ENCODE measurements at regions of chr12 and their contacts with region 1.

Region 1: DNA sequence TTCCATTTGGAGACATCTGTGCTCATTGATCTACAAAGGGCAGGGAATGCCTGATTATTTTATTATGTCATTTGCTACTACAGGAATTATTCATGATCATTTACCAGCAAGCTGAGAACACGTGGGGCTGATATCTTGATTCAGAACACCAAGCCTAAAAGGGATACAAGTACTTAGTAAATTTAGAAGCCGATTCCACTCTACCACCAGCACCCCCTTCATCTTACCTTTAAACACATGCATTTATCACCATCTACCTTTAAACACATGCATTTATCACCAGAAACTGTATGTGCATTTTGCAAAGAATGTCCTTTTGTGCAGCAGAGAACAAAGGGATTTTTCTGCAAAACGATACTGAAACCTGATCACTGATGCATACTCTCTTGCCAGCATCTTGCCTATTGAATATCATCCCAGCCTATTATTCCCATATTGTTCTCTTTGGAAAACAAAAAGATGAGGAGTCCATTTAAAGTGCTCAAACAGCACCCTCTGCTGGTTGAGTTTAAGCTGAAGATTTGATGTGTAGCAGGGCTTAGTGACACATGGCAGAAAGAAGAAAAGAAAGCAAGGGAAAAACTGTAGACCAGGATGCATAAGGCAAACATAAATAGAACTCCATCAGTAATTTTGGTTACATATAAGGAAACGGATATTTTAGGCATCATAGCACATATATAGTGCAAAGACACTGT is 132.6 kb upstream of the PLEKHG7 start:
- DNase-seq: peak; percentile 89
- H3K4me3 Mint-ChIP-seq: no peak overlapping the region
- H3K27ac Mint-ChIP-seq: no peak overlapping the region
- H3K4me1 Mint-ChIP-seq: no peaks in the 10 kb centered on the region
- H3K27me3 Mint-ChIP-seq: no peaks in the 10 kb centered on the region
- CTCF ChIP-seq: peak; percentile 71

Region 2: GRCh38 chr12:91361864-91362263 is 1208.3 kb before region 1 on chr12:
- CTCF ChIA-PET with region 1: interaction called, 3 read pairs
- POLR2A ChIA-PET with region 1: no interaction called
- intact Hi-C with region 1: loop called (anchors 2 kb)
- DNase-seq: peak; percentile 47
- H3K4me3 Mint-ChIP-seq: no peak overlapping the region
- H3K27ac Mint-ChIP-seq: no peak overlapping the region
- H3K4me1 Mint-ChIP-seq: peaks cover 5% of the 10 kb centered on the region
- H3K27me3 Mint-ChIP-seq: peaks cover 11% of the 10 kb centered on the region
- CTCF ChIP-seq: peak; percentile 50

Region 3: GRCh38 chr12:91811481-91812287 is 758.5 kb before region 1 on chr12:
- CTCF ChIA-PET with region 1: interaction called, 7 read pairs
- POLR2A ChIA-PET with region 1: interaction called, 4 read pairs
- intact Hi-C with region 1: loop called (anchors 2 kb)
- DNase-seq: peak; percentile 61
- H3K4me3 Mint-ChIP-seq: no peak overlapping the region
- H3K27ac Mint-ChIP-seq: peak overlapping the region; percentile 43
- H3K4me1 Mint-ChIP-seq: peaks cover 11% of the 10 kb centered on the region
- H3K27me3 Mint-ChIP-seq: no peaks in the 10 kb centered on the region
- CTCF ChIP-seq: peak; percentile 57

Region 4: GRCh38 chr12:92136965-92137721 is 433.1 kb before region 1 on chr12:
- CTCF ChIA-PET with region 1: interaction called, 3 read pairs
- POLR2A ChIA-PET with region 1: interaction called, 124 read pairs
- intact Hi-C with region 1: no loop called
- DNase-seq: peak; percentile 72
- H3K4me3 Mint-ChIP-seq: peak overlapping the region; percentile 89
- H3K27ac Mint-ChIP-seq: peak overlapping the region; percentile 74
- H3K4me1 Mint-ChIP-seq: peaks cover 60% of the 10 kb centered on the region
- H3K27me3 Mint-ChIP-seq: no peaks in the 10 kb centered on the region
- CTCF ChIP-seq: no peak

Region 5: GRCh38 chr12:92378682-92379479 is 191.3 kb before region 1 on chr12:
- CTCF ChIA-PET with region 1: no interaction called
- POLR2A ChIA-PET with region 1: no interaction called
- intact Hi-C with region 1: no loop called
- DNase-seq: no peak
- H3K4me3 Mint-ChIP-seq: no peak overlapping the region
- H3K27ac Mint-ChIP-seq: no peak overlapping the region
- H3K4me1 Mint-ChIP-seq: no peaks in the 10 kb centered on the region
- H3K27me3 Mint-ChIP-seq: no peaks in the 10 kb centered on the region
- CTCF ChIP-seq: no peak

Region 6: DNA sequence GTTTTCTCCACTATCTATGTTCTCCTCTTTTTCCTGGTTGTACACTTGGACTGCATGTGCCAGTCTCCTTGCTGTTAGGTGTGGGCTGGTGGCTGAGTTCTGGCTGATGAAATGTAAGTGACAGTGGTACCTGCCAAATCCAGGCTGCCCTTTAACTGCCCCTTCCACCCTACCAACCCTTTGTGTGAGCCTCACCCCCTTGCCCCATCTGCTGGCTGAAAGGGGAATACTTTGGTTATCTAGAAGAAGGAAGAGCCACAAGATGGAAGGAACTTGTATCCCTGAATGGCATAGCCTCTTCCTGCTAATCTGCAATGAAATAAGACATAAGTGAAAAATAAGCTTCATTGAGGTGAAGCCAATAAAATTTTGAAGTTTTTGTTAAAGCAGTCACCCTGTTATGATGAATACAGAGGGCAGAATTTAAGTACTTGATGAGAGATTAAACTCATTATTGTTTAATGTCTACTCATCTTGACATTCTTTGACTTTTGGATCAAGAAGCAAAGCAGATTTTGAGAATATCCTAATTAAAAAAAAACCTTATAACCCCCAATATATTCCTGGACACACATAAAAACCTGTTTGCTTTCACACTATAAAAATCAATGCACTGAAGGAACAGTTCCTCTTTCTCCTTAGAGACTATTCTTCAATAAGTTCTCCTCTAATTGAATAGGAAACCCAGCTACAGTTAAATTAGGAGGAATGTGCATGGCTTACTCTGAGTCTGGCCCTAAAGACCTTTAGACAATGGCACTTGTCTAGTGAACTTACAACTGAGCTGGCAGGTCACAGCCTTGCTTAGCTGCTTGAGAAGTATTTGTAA is 161.9 kb before region 1 on chr12:
- CTCF ChIA-PET with region 1: interaction called, 3 read pairs
- POLR2A ChIA-PET with region 1: interaction called, 5 read pairs
- intact Hi-C with region 1: loop called (anchors 5 kb)
- DNase-seq: peak; percentile 68
- H3K4me3 Mint-ChIP-seq: no peak overlapping the region
- H3K27ac Mint-ChIP-seq: no peak overlapping the region
- H3K4me1 Mint-ChIP-seq: no peaks in the 10 kb centered on the region
- H3K27me3 Mint-ChIP-seq: no peaks in the 10 kb centered on the region
- CTCF ChIP-seq: peak; percentile 48

Region 7: GRCh38 chr12:92608151-92609091 is 38.2 kb after region 1 on chr12:
- CTCF ChIA-PET with region 1: interaction called, 62 read pairs
- POLR2A ChIA-PET with region 1: interaction called, 3 read pairs
- intact Hi-C with region 1: loop called (anchors 1 kb)
- DNase-seq: peak; percentile 70
- H3K4me3 Mint-ChIP-seq: no peak overlapping the region
- H3K27ac Mint-ChIP-seq: no peak overlapping the region
- H3K4me1 Mint-ChIP-seq: peaks cover 11% of the 10 kb centered on the region
- H3K27me3 Mint-ChIP-seq: no peaks in the 10 kb centered on the region
- CTCF ChIP-seq: peak; percentile 47